Motor neuron (in vitro differentiated cells): ENCODE measurements at regions of chr6 and their contacts with region 1.

Region 1: DNA sequence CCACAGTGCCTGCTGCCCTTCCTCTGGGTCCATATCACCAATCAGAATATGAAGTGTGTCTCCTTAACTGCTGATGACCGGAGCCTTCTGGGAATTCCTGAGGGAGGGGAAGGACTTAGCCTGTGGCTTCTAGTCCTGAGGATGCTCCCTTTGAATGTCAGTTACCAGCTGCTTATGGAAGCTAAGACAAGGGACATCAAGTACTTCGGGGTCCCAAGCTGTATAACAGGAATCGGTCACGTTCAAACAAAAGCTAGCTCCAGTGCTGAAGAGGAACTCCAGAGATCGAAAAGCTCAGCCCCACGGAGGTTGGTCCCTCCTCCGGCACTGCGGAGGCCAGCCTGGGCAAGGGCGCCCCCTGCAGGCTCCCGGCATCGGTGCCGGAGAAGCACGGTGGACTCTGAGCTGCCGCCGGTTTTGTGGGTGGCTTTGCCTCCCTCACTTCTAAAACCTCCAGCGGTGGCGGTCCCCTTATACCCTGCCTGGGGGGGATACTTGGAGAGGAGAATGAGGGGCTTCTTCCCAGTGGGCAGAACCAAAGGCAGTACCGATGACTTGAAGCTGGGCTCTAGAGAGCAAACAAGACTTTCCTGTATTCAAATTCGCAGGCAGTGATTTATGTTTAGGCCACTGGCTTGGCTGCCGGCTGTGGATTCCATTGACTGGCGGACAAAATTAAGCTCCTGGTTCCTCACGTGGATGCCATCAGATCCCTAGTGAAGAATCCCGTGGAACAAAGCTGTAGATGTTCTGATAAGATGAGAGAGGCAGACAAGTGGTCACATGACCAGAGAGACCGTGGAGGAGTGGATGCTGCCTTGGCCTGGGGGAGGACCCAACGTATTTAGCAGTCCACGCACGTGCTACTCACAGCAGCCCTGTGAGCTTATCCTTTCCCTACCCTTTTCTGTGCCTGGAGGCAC is 16.2 kb upstream of the UBR2 start:
- ATAC-seq: peak; percentile 92 to 99 (median 94)
- H3K4me3 ChIP-seq: peak overlapping the region; percentile 33 to 50 (median 39)
- H3K27ac ChIP-seq: peak overlapping the region; percentile 31 to 81
- H3K4me1 ChIP-seq: peaks cover 12 to 17% of the 10 kb centered on the region in 2 donors

Region 2: GRCh38 chr6:42230345-42231321 is 317.0 kb before region 1 on chr6:
- in situ Hi-C with region 1: loop called in 1 of 9 experiments (anchors 25 kb)
- ATAC-seq: peak in 5 of 8 experiments; percentile 27 to 79 (median 72)
- H3K4me3 ChIP-seq: no peak overlapping the region
- H3K27ac ChIP-seq: no peak overlapping the region
- H3K4me1 ChIP-seq: no peaks in the 10 kb centered on the region

Region 3: DNA sequence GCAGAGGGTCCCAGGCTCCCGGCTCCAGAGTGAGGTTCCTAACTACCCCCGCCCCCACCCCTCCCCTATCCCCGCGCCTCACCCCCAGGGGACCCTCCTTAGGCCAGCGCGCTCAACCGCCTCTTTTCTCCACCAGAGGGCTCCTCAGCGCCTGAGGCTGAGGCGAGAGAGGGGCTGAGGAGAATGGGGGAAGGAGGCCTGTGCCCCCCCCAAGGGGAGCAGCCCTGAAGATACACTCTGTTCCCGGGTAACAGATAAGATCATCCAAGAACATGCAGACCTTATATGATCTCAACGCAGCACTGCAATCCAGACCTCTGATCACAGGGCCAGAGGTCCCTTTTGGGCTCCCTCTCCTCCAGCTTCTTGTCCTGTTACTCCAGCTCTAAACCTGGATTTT is 286.7 kb before region 1 on chr6:
- in situ Hi-C with region 1: loop called in 6 of 9 experiments (anchors 25 kb)
- ATAC-seq: peak; percentile 5 to 86 (median 70)
- H3K4me3 ChIP-seq: no peak overlapping the region
- H3K27ac ChIP-seq: peak overlapping the region in 1 of 2 donors; percentile 42
- H3K4me1 ChIP-seq: no peaks in the 10 kb centered on the region

Region 4: DNA sequence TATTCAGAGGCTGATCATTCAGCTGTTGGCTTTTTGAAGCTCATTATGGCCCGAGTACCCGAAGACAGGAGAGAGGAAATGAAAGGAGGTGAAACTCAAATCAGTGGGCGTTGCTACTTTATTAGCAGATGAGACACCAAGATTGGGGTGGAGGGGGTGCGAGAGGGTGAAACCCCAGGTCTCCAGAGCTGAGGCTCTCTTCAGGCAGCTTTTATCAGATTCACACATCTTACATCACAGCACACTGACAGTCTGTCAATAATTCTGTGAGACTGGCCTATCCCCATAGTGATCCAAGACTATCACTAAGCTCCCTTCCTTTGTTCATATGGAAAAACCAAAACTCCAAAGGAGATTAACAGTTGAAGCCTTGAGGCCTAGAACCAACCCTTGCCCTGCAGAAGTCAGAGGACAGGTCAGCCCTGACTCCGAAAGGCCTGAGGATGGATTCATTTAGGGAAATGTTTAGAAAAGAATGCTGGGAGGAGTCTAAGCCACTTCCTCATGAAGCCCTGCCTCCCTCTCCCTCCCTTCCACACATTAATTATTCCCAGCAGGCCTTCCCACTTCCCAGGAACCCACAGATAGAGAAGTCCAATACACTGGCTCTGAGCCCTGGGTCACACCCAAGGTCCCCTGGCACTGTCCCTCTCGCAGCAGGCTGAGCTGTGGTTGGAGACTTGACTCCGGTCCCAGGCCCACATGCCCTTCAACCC is 119.2 kb before region 1 on chr6:
- in situ Hi-C with region 1: loop called in 1 of 9 experiments (anchors 25 kb)
- ATAC-seq: peak; percentile 50 to 98 (median 85)
- H3K4me3 ChIP-seq: no peak overlapping the region
- H3K27ac ChIP-seq: peak overlapping the region in 1 of 2 donors; percentile 12
- H3K4me1 ChIP-seq: peaks cover 14 to 18% of the 10 kb centered on the region in 2 donors

Region 5: GRCh38 chr6:42782622-42783176 is 235.0 kb after region 1 on chr6:
- in situ Hi-C with region 1: no loop called
- ATAC-seq: peak; percentile 57 to 81 (median 74)
- H3K4me3 ChIP-seq: peak overlapping the region; percentile 76 to 99 (median 92)
- H3K27ac ChIP-seq: peak overlapping the region; percentile 99 to 100
- H3K4me1 ChIP-seq: peaks cover 22 to 28% of the 10 kb centered on the region in 2 donors

Region 6: GRCh38 chr6:43141644-43142043 is 594.0 kb after region 1 on chr6:
- in situ Hi-C with region 1: no loop called
- ATAC-seq: no peak
- H3K4me3 ChIP-seq: no peak overlapping the region
- H3K27ac ChIP-seq: no peak overlapping the region
- H3K4me1 ChIP-seq: peaks cover 8 to 12% of the 10 kb centered on the region in 2 donors